Activated CD8-positive, alpha-beta T cell treated with anti-CD3 and anti-CD28 coated beads, Interleukin-2, amount 10 ng/mL, durations not matched to agents 7 days and 5 days (primary cell): ENCODE measurements at regions of chr15 and their contacts with region 1.

Region 1: GRCh38 chr15:52735231-52736089 is 54.7 kb downstream of the ONECUT1 start:
- DNase-seq: peak; percentile 86
- ATAC-seq: peak; percentile 91
- H3K4me3 Mint-ChIP-seq: no peak overlapping the region
- H3K27ac Mint-ChIP-seq: no peak overlapping the region
- H3K4me1 Mint-ChIP-seq: peaks cover 26% of the 10 kb centered on the region
- H3K27me3 Mint-ChIP-seq: peaks cover 14% of the 10 kb centered on the region

Region 2: GRCh38 chr15:52683580-52683979 is 51.9 kb before region 1 on chr15:
- CTCF ChIA-PET with region 1: interaction called, 10 read pairs
- POLR2A ChIA-PET with region 1: interaction called, 3 read pairs
- DNase-seq: no peak
- ATAC-seq: no peak
- H3K4me3 Mint-ChIP-seq: no peak overlapping the region
- H3K27ac Mint-ChIP-seq: peak overlapping the region; percentile 72
- H3K4me1 Mint-ChIP-seq: peaks cover 27% of the 10 kb centered on the region
- H3K27me3 Mint-ChIP-seq: peaks cover 2% of the 10 kb centered on the region

Region 3: DNA sequence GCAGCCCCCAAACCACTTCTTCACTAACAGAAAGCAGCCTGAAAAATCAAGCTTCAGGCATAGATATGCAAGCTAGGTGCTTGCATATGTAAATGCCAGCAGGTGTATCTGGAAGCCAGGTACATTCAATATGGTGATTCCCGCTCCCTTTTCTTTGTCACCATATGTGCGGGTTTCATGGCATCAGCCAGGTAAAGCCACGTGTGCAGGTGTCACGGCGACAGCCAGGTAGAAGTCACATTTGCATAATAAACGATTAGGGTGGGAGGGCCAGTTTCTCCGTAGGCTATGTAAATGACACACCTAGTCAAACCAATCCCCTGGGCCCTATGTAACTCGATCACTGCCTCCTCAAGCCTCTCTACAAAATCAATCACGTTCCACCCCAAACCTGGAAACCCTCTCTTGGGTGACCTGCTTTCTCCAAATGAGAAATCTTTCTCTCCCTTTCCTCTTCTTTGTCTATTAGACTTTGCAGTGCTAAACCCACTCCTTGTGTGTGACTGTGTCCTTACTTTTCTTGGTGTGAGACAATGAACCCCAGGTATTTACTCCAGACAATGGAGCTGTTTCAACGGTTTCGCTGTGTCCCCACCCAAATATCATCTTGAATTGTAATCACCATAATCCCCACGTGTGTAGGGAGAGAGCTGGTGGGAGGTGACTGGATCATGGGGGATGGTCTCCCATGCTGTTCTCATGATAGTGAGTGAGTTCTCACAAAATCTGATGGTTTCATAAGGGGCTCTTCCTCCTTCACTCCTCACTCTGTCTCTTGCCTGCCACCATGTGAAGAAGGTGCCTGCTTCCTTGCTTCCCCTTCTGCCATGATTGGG is 10.1 kb after region 1 on chr15:
- CTCF ChIA-PET with region 1: no interaction called
- POLR2A ChIA-PET with region 1: no interaction called
- DNase-seq: no peak
- ATAC-seq: no peak
- H3K4me3 Mint-ChIP-seq: no peak overlapping the region
- H3K27ac Mint-ChIP-seq: no peak overlapping the region
- H3K4me1 Mint-ChIP-seq: no peaks in the 10 kb centered on the region
- H3K27me3 Mint-ChIP-seq: peaks cover 16% of the 10 kb centered on the region